ENCODE measurements at regions of chr7 and their contacts with region 1.

Region 1: DNA sequence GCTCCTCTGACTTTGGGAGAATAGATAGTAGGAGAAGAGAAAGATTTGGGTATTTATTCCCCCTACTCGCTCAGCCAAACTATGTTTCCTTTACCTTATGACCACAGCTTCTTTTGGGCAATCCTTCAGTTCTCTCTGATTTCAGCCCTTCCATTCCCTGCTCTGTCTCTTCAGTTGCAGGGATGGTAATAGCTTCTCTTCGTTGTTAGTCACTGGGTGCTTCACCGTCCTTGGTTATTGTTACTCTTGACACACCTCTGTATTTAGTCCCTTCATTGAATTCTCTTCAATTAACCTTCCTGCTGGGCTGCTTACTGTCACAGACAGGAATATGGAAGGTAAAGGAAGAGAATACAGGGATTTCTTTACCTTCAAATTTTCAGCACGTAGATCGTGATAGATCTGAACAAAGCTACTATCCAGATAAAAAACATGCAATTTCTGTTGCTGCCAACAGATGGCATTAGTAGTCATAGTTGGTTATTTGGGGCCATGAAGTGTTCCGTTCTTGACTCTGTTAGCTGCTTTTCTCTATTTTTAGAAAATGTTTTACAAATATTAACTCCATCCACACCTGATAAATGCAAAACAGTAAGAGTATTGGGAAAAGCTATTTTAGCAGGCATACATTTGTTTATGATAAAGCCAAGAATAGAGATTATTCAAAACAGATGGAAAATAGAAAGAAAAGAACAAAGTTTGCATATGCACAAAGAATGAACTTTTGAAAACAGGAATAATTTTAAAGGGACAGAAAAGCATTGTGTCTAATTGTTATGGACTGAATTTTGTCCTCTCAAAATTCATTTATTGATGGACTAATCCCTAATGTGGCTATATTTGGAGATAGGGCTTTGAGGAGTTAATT is 14.0 kb upstream of the PTTG1IP2 start:
- DNase-seq: peak; percentile 57
- H3K4me3 ChIP-seq: peak overlapping the region in 1 of 3 experiments; percentile 16
- H3K27ac ChIP-seq: no peak overlapping the region
- H3K4me1 ChIP-seq: no peaks in the 10 kb centered on the region
- H3K27me3 ChIP-seq: no peaks in the 10 kb centered on the region
- CTCF ChIP-seq: peak; percentile 55 to 56
- POLR2A ChIP-seq: no peak

Region 2: DNA sequence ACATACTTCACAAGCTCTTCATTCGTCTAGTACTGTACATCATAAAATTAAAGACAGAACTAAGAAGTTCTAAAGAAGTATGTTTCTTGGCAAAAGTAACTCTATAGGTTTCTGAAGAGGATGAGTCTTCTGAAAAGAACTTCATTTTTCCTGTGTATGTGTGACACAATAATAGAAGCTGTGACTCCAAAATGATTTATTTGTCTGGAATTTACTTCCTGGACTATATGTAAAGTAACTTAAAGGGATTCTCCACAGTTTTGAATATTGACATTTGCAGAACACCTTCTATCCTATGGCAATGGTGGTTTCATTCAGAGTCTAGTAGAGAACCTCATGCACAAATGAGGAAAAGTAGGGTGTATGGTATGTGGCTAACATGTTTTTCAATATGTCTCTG is 72.0 kb before region 1 on chr7:
- CTCF ChIA-PET with region 1: no interaction called
- POLR2A ChIA-PET with region 1: no interaction called
- dilution Hi-C with region 1: no loop called
- intact Hi-C with region 1: no loop called
- DNase-seq: peak; percentile 52
- H3K4me3 ChIP-seq: peak overlapping the region in 1 of 3 experiments; percentile 6
- H3K27ac ChIP-seq: peak overlapping the region; percentile 76
- H3K4me1 ChIP-seq: peaks cover 29% of the 10 kb centered on the region
- H3K27me3 ChIP-seq: no peaks in the 10 kb centered on the region
- CTCF ChIP-seq: no peak
- POLR2A ChIP-seq: no peak

Region 3: GRCh38 chr7:90465816-90466215 is 10.4 kb after region 1 on chr7:
- CTCF ChIA-PET with region 1: interaction called, 24 read pairs
- POLR2A ChIA-PET with region 1: no interaction called
- dilution Hi-C with region 1: no loop called
- intact Hi-C with region 1: no loop called
- DNase-seq: no peak
- H3K4me3 ChIP-seq: no peak overlapping the region
- H3K27ac ChIP-seq: no peak overlapping the region
- H3K4me1 ChIP-seq: no peaks in the 10 kb centered on the region
- H3K27me3 ChIP-seq: peaks cover 0 to 2% of the 10 kb centered on the region in 2 experiments
- CTCF ChIP-seq: no peak
- POLR2A ChIP-seq: no peak

Region 4: GRCh38 chr7:90512821-90513254 is 57.4 kb after region 1 on chr7:
- CTCF ChIA-PET with region 1: interaction called, 34 read pairs
- POLR2A ChIA-PET with region 1: no interaction called
- dilution Hi-C with region 1: no loop called
- intact Hi-C with region 1: no loop called
- DNase-seq: no peak
- H3K4me3 ChIP-seq: no peak overlapping the region
- H3K27ac ChIP-seq: no peak overlapping the region
- H3K4me1 ChIP-seq: no peaks in the 10 kb centered on the region
- H3K27me3 ChIP-seq: peaks cover 0 to 5% of the 10 kb centered on the region in 2 experiments
- CTCF ChIP-seq: no peak
- POLR2A ChIP-seq: no peak

Region 5: DNA sequence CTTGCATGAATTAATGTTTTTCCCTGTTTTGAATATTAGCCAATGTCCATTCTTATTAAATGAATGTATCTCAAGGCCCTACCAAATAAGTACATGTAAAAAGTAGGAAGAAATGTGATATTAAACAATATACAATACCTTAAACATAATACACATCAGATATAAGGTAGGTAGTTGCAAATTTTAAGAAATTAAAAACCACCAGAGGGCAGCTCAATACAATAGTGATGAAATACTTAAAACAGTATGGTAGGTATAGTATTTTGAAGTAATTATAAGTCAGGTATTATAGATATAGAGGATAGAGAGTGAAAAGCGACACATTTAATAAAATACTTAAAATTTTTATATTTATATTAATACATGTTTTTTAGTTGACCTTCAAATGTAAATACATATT is 97.1 kb after region 1 on chr7:
- CTCF ChIA-PET with region 1: interaction called, 13 read pairs
- POLR2A ChIA-PET with region 1: no interaction called
- dilution Hi-C with region 1: no loop called
- intact Hi-C with region 1: no loop called
- DNase-seq: peak; percentile 46
- H3K4me3 ChIP-seq: no peak overlapping the region
- H3K27ac ChIP-seq: no peak overlapping the region
- H3K4me1 ChIP-seq: no peaks in the 10 kb centered on the region
- H3K27me3 ChIP-seq: peaks cover 0 to 5% of the 10 kb centered on the region in 2 experiments
- CTCF ChIP-seq: peak in 1 of 2 donors; percentile 3
- POLR2A ChIP-seq: no peak

Region 6: DNA sequence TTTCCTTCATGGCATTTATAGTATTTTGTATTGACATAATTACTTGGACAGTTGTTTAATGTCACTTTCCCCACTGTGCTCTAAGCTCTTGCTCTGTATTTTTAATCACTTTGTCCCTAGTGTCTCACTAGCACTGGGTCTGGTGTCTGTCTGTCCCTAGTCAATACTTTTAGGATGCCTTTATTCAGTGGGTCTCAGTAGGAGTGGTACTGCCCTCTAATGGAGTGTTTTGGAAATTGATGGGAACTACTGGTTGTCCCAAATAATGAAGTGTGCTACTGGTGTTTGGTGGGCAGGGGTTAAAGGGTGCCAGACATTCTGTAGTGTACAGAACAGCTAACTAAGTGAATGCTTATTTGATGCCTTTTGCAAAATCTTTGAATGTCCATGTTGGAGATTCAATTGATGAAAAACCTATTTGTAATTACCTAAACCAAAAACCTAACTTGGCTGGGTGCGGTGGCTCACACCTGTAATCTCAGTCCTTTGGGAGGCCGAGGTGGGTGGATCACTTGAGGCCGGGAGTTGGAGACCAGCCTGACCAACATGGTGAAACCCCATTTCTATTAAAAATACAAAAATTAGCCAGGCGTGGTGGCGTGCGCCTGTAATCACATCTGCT is 174.0 kb after region 1 on chr7:
- CTCF ChIA-PET with region 1: interaction called, 71 read pairs
- POLR2A ChIA-PET with region 1: no interaction called
- dilution Hi-C with region 1: no loop called
- intact Hi-C with region 1: loop called (anchors 1 kb)
- DNase-seq: peak; percentile 75
- H3K4me3 ChIP-seq: no peak overlapping the region
- H3K27ac ChIP-seq: no peak overlapping the region
- H3K4me1 ChIP-seq: peaks cover 18% of the 10 kb centered on the region
- H3K27me3 ChIP-seq: no peaks in the 10 kb centered on the region
- CTCF ChIP-seq: peak; percentile 56 to 60
- POLR2A ChIP-seq: no peak

Region 7: DNA sequence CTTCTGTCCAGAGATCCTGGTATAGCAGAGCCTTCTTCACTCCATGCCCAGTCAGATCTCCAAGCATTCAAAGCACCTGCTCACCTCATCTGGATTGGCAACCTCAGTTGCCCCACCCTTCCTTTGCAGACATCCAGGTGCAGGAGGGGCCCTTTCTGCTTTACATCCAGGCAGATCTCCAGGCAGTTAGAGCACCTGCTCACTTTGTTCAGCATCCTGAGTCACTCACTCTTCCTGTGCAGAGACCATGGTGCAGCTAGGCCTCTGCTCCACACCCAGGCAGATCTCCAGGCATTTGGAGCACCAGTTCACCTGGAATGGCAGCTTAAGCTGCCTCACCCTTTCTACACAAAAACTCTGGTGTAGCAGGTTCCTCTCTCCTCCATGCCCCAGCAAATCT is 293.9 kb after region 1 on chr7:
- CTCF ChIA-PET with region 1: interaction called, 9 read pairs
- POLR2A ChIA-PET with region 1: no interaction called
- dilution Hi-C with region 1: no loop called
- intact Hi-C with region 1: loop called (anchors 10 kb)
- DNase-seq: no peak
- H3K4me3 ChIP-seq: no peak overlapping the region
- H3K27ac ChIP-seq: no peak overlapping the region
- H3K4me1 ChIP-seq: peaks cover 5% of the 10 kb centered on the region
- H3K27me3 ChIP-seq: no peaks in the 10 kb centered on the region
- CTCF ChIP-seq: no peak
- POLR2A ChIP-seq: no peak